Naive thymus-derived CD4-positive, alpha-beta T cell (primary cell): ENCODE measurements at regions of chr5 and their contacts with region 1.

Region 1: DNA sequence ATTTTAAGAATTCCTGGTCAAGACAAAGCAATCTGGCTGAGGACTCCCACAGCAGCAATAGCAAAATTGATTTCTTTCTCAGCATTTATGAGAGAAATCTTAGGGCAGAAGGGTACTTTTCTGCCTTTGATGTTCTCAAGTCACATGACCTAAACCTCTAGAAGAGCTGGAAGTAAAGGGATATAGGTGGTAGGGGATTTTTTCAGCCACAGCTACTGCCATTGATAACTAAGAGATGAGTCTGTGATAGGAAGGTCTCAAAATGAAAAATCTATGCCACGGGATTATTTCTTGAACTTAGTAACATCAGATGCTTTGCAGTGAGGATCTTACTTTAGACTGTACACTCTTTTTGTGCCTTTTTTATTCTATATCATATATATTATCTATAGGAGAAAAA is 35.6 kb downstream of the IL6ST start:
- DNase-seq: peak in 1 of 9 donors; percentile 47
- ATAC-seq: peak; percentile 84
- H3K4me3 ChIP-seq: no peak overlapping the region
- H3K4me3 Mint-ChIP-seq: peak overlapping the region in 4 of 10 donors; percentile 13 to 34 (median 32)
- H3K27ac ChIP-seq: peak overlapping the region; percentile 48
- H3K27ac Mint-ChIP-seq: peak overlapping the region in 7 of 9 donors; percentile 49 to 89 (median 69)
- H3K4me1 ChIP-seq: peaks cover 0 to 4% of the 10 kb centered on the region in 2 donors
- H3K4me1 Mint-ChIP-seq: peaks cover 15 to 59% (median 30%) of the 10 kb centered on the region in 7 donors
- H3K27me3 ChIP-seq: no peaks in the 10 kb centered on the region
- H3K27me3 Mint-ChIP-seq: no peaks in the 10 kb centered on the region

Region 2: DNA sequence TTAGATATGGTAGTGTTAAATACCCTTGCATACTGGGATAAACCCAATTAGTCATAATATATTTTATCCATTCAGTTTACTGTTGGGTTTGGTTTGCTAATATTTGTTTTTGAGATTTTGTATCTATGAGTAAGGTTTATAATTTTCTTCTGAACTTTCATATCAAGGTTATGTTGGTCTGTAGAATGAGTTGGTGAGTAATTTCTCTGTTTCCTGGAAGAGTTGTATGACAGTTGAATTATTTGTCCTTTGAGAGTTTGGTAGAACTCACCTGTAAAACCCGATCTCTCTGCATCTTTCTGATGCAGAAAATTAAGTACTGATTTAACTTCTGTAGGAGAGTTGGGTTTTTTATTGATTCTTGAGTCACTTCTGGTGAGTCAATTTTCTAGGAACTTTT is 201.0 kb before region 1 on chr5:
- CTCF ChIA-PET with region 1: no interaction called
- POLR2A ChIA-PET with region 1: no interaction called
- intact Hi-C with region 1: no loop called
- DNase-seq: no peak
- ATAC-seq: no peak
- H3K4me3 ChIP-seq: no peak overlapping the region
- H3K4me3 Mint-ChIP-seq: no peak overlapping the region
- H3K27ac ChIP-seq: no peak overlapping the region
- H3K27ac Mint-ChIP-seq: peak overlapping the region in 1 of 9 donors; percentile 70
- H3K4me1 ChIP-seq: peaks cover 0 to under 1% of the 10 kb centered on the region in 2 donors
- H3K4me1 Mint-ChIP-seq: peaks cover 0 to 24% (median under 1%) of the 10 kb centered on the region in 7 donors
- H3K27me3 ChIP-seq: peaks cover 0 to 5% of the 10 kb centered on the region in 2 donors
- H3K27me3 Mint-ChIP-seq: peaks cover 4 to 34% (median 18%) of the 10 kb centered on the region in 5 donors

Region 3: DNA sequence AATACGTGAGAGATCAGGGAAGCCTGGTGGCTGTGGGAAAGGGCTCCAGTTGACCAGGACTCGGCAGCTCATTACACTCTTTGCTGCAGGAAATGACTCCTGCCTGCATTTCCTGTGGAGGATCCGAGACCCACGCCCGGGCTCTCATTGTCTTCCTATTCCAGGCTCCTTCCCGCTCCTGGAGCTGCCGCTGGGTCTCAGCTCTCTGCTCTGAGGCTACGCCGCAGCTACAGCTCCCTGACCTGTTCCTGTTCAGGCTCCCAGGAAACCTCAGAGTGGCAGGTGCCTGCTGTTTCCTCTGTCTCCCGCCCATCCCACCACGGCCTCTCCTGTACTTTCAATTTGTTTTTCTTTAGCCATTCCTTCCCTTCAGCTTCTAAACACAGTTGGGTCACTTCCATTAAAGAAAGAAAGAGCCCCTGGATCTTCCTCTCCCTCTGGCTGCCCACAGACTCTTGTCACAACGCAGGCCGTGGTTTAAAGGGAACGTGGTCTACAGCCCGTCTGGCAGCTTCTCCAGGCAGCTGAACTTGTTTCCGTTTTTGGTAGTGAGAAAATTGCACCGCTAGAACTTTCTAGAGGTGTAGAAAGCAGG is 35.9 kb before region 1 on chr5:
- CTCF ChIA-PET with region 1: no interaction called
- POLR2A ChIA-PET with region 1: no interaction called
- intact Hi-C with region 1: no loop called
- DNase-seq: peak in 1 of 9 donors; percentile 30
- ATAC-seq: peak; percentile 64
- H3K4me3 ChIP-seq: peak overlapping the region; percentile 69
- H3K4me3 Mint-ChIP-seq: peak overlapping the region; percentile 90 to 100 (median 94)
- H3K27ac ChIP-seq: peak overlapping the region; percentile 25
- H3K27ac Mint-ChIP-seq: peak overlapping the region; percentile 5 to 93 (median 73)
- H3K4me1 ChIP-seq: peaks cover 7 to 9% of the 10 kb centered on the region in 2 donors
- H3K4me1 Mint-ChIP-seq: peaks cover 16 to 37% (median 21%) of the 10 kb centered on the region in 7 donors
- H3K27me3 ChIP-seq: no peaks in the 10 kb centered on the region
- H3K27me3 Mint-ChIP-seq: no peaks in the 10 kb centered on the region

Region 4: DNA sequence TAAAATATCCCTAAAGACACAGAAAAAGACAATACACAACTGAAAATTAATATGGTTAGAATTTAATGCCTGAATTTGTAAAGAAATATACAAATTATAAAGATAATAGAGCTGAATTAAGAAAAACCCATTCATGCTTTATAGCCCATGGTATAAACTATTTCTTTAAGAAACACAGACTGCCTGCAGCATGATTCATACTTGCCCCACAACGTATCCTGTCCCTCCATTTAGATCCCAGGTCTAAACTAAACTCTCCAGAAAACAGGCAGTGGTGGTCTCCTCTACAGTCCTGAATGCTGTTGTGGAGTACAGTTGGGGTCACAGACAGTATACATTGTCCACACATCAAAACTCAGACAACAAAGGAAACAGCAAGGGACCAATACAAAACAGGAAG is 10.7 kb after region 1 on chr5:
- CTCF ChIA-PET with region 1: interaction called, 4 read pairs
- POLR2A ChIA-PET with region 1: interaction called, 6 read pairs
- intact Hi-C with region 1: loop called in 1 of 2 experiments (anchors 1 kb)
- DNase-seq: no peak
- ATAC-seq: peak; percentile 23
- H3K4me3 ChIP-seq: no peak overlapping the region
- H3K4me3 Mint-ChIP-seq: peak overlapping the region; percentile 25 to 81 (median 59)
- H3K27ac ChIP-seq: peak overlapping the region; percentile 2
- H3K27ac Mint-ChIP-seq: peak overlapping the region; percentile 29 to 94 (median 79)
- H3K4me1 ChIP-seq: peaks cover 0 to 41% of the 10 kb centered on the region in 2 donors
- H3K4me1 Mint-ChIP-seq: peaks cover 34 to 90% (median 68%) of the 10 kb centered on the region in 7 donors
- H3K27me3 ChIP-seq: no peaks in the 10 kb centered on the region
- H3K27me3 Mint-ChIP-seq: no peaks in the 10 kb centered on the region